Mucosa of descending colon (tissue), 3 donors: ENCODE measurements at regions of chr6 and their contacts with region 1.

Region 1: DNA sequence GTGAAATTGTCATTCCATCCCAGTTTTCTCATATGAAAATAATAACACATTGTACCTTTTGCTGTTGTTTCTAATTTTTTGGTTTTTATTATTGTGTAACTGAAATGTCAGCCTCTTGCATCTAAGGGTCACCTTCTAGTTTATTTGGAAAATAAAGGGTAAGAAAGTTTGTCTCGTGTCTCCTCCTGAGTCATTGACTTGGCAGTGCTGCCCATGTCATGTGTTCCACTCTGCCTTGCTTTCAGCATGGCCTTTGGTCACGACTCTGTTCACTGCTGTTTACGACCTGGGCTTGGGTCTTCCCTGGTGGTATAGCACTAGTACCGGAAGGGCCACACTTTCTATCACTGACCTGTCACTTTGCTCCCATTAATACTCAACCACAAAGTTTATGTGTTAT is 171.4 kb upstream of the RSPO3 start:
- DNase-seq: no peak
- ATAC-seq: no peak
- H3K4me3 ChIP-seq: no peak overlapping the region
- H3K4me1 ChIP-seq: no peaks in the 10 kb centered on the region
- CTCF ChIP-seq: no peak

Region 2: GRCh38 chr6:126747728-126748540 is 199.1 kb before region 1 on chr6:
- intact Hi-C with region 1: loop called in 1 of 2 experiments (anchors 10 kb)
- DNase-seq: no peak
- ATAC-seq: no peak
- H3K4me3 ChIP-seq: no peak overlapping the region
- H3K4me1 ChIP-seq: no peaks in the 10 kb centered on the region
- CTCF ChIP-seq: no peak